Posterior vena cava (tissue), 2 donors: ENCODE measurements at regions of chr21 and their contacts with region 1.

Region 1: DNA sequence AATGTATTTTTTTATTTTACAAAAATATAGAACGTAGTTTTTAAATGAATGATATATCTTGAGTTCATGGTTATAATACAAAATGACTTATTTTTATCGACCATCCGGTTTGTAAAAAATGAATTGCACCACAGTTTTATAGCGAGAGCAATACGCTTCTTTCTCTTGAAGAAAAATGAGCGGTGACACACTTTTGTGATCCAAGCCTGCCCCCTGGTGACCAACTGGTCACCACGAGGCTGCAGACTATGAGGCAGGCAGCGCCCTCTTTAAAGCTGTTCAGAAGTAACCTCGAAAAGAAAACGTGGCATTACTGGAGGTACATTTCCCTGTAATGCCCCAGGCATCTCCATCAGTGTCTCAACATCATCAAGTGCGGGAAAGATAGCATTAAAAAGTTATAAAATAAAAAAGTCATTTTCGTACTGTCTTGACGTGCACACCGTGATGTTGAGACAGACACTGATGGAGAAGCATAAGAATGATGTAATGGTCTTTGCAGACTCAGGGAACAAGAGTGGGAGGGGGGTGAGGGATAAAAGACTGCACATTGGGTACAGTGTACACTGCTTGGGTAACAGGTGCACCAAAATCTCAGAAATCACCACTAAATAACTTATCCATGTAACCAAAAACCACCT is 734.2 kb upstream of the ADAMTS5 start:
- DNase-seq: peak; percentile 93

Region 2: DNA sequence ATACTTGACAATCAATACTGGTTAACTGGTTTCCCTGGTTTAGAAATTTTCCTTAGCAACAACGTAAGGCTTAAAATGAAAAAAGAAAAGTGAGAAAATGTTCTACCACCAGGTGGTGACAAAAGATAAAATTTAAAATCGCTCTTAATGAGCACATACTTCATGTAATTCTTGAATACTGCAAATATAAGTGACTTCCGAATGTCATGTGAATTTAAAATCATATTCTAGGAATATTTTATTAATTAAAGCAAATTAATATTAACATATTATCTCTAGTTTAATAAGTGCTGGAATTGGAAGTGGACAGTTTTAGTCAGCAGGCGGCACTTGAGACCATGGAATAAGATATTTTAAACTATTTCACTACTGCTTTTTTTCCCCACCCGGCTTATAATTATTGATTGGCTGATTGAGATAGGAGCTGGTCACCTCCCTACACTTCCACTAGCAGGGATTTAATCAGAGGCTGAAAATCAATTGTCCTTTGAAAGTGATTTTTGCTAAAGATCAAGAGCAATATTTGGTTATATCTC is 850.9 kb before region 1 on chr21:
- intact Hi-C with region 1: loop called (anchors 5 kb)
- DNase-seq: no peak